ENCODE measurements at regions of chr17 and their contacts with region 1.

Region 1: DNA sequence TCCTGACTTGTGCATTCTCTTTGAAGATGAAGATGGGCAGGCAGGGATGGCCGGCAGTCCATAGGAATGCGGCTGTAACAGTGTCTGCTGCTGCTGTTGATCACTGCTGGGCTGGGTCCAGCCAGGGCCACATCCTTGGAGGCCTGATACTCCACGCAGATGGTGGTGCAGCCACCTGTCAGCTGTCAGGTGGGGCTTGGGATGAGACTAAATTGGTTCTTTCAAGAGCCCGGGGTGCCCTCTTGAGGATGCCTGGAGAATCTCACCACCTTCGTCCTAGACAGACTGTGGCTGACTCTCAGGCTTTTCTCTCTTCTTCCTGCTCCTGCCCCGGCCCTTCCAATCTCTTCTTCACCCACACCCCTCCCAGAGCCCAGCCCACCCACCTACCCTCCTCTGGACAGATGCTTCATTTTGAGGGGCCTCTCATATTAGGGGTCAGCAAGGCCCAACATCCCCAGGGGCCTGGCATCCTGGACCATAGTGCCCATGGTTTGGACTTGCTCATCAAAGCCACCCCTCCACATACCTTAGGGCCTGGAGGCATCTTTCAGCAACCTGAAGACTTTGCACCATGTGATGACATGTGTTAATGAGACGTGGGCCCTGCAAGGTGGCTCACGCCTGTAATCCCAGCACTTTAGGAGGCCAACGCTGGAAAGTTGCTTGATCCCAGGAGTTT is 19.1 kb downstream of the OSBPL7 start:
- DNase-seq: peak; percentile 80
- ATAC-seq: peak; percentile 97
- H3K4me3 ChIP-seq: no peak overlapping the region
- H3K27ac ChIP-seq: no peak overlapping the region
- H3K4me1 ChIP-seq: no peaks in the 10 kb centered on the region
- H3K27me3 ChIP-seq: no peaks in the 10 kb centered on the region
- CTCF ChIP-seq: peak; percentile 87

Region 2: GRCh38 chr17:47698749-47699535 is 103.5 kb before region 1 on chr17:
- CTCF ChIA-PET with region 1: interaction called, 3 read pairs
- POLR2A ChIA-PET with region 1: no interaction called
- intact Hi-C with region 1: loop called (anchors 1 kb)
- DNase-seq: peak; percentile 75
- ATAC-seq: peak; percentile 26
- H3K4me3 ChIP-seq: no peak overlapping the region
- H3K27ac ChIP-seq: no peak overlapping the region
- H3K4me1 ChIP-seq: peaks cover 7% of the 10 kb centered on the region; the same call in 1 of the 2 replicates
- H3K27me3 ChIP-seq: no peaks in the 10 kb centered on the region
- CTCF ChIP-seq: peak; percentile 99